H1 (cell line): ENCODE measurements at regions of chr1 and their contacts with region 1.

Region 1: GRCh38 chr1:110495926-110496600 is 22.9 kb downstream of the KCNA10 start:
- DNase-seq: peak; percentile 58 to 91
- H3K4me3 ChIP-seq: no peak overlapping the region
- H3K27ac ChIP-seq: no peak overlapping the region
- H3K4me1 ChIP-seq: peaks cover 6 to 11% (median 8%) of the 10 kb centered on the region in 4 experiments; a peak in 6 of 7 replicates
- H3K27me3 ChIP-seq: no peaks in the 10 kb centered on the region
- CTCF ChIP-seq: peak; percentile 62 to 95 (median 93)
- EP300 ChIP-seq: no peak
- POLR2A ChIP-seq: no peak
- RAD21 ChIP-seq: peak; percentile 99 to 100

Region 2: GRCh38 chr1:110196917-110197765 is 298.9 kb before region 1 on chr1:
- CTCF ChIA-PET with region 1: interaction called, 33 read pairs
- POLR2A ChIA-PET with region 1: no interaction called
- DNase-seq: peak in 1 of 2 experiments; percentile 63
- H3K4me3 ChIP-seq: no peak overlapping the region
- H3K27ac ChIP-seq: no peak overlapping the region
- H3K4me1 ChIP-seq: peaks cover 0 to 6% (median 2%) of the 10 kb centered on the region in 4 experiments; a peak in 2 of 7 replicates
- H3K27me3 ChIP-seq: no peaks in the 10 kb centered on the region
- CTCF ChIP-seq: peak; percentile 73 to 95 (median 81)
- EP300 ChIP-seq: no peak
- POLR2A ChIP-seq: no peak
- RAD21 ChIP-seq: peak; percentile 70 to 82

Region 3: GRCh38 chr1:110312188-110313121 is 183.6 kb before region 1 on chr1:
- CTCF ChIA-PET with region 1: interaction called, 19 read pairs
- POLR2A ChIA-PET with region 1: no interaction called
- DNase-seq: peak; percentile 25 to 84
- H3K4me3 ChIP-seq: peak overlapping the region in 3 of 4 experiments; percentile 6 to 46 (median 29); a peak in 5 of 8 replicates
- H3K27ac ChIP-seq: no peak overlapping the region
- H3K4me1 ChIP-seq: peaks cover 0 to 7% (median 4%) of the 10 kb centered on the region in 4 experiments; a peak in 5 of 7 replicates
- H3K27me3 ChIP-seq: no peaks in the 10 kb centered on the region; a peak in 1 of 7 replicates
- CTCF ChIP-seq: peak; percentile 97 to 98 (median 98)
- EP300 ChIP-seq: no peak
- POLR2A ChIP-seq: no peak
- RAD21 ChIP-seq: peak; percentile 97 to 98

Region 4: DNA sequence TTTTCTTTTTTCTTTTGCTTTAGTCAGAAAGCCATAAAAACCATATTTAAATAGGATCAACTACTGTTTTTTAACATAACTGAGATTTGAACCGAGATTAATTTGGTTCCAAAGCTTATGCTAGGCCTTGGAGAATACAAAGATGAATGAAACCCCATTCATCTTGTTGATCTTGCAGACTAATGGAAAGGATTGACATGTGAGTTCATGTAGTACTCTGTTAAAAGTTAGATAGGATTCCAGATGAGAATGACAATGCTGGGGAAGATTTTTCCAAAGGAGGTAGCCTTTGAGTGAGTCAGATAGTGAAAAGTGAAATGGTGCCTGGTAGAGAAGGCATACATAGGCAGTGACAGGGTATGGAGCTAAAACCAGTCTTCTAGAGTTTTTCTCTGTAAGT is 134.2 kb before region 1 on chr1:
- CTCF ChIA-PET with region 1: no interaction called
- POLR2A ChIA-PET with region 1: no interaction called
- DNase-seq: no peak
- H3K4me3 ChIP-seq: no peak overlapping the region
- H3K27ac ChIP-seq: no peak overlapping the region
- H3K4me1 ChIP-seq: no peaks in the 10 kb centered on the region
- H3K27me3 ChIP-seq: no peaks in the 10 kb centered on the region
- CTCF ChIP-seq: no peak
- EP300 ChIP-seq: no peak
- POLR2A ChIP-seq: no peak
- RAD21 ChIP-seq: no peak

Region 5: DNA sequence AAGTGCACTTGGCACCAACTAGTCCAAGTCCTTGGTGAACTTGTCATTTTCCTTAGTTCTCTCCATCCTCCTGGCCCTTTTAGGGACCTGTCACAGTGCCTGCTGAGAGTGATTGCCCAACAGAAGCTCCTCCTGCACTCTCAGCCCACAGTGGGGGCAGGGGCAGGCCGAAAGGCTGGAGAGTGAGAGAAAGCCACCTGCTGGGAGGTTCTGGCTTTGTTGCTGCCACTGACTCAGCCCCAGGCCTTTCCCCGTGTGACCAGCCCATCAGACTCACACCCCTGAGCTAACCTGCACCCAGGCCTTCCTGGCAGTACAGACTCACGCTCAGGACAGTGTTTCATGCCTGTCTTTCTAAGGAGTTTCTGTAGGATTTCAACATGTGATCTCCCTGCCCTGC is 62.3 kb before region 1 on chr1:
- CTCF ChIA-PET with region 1: interaction called, 23 read pairs
- POLR2A ChIA-PET with region 1: no interaction called
- DNase-seq: peak; percentile 38 to 66
- H3K4me3 ChIP-seq: no peak overlapping the region
- H3K27ac ChIP-seq: no peak overlapping the region
- H3K4me1 ChIP-seq: peaks cover 3 to 9% (median 7%) of the 10 kb centered on the region in 4 experiments; a peak in 6 of 7 replicates
- H3K27me3 ChIP-seq: no peaks in the 10 kb centered on the region
- CTCF ChIP-seq: no peak
- EP300 ChIP-seq: no peak
- POLR2A ChIP-seq: no peak
- RAD21 ChIP-seq: peak in 1 of 2 experiments; percentile 25; a peak in 1 of 4 replicates

Region 6: DNA sequence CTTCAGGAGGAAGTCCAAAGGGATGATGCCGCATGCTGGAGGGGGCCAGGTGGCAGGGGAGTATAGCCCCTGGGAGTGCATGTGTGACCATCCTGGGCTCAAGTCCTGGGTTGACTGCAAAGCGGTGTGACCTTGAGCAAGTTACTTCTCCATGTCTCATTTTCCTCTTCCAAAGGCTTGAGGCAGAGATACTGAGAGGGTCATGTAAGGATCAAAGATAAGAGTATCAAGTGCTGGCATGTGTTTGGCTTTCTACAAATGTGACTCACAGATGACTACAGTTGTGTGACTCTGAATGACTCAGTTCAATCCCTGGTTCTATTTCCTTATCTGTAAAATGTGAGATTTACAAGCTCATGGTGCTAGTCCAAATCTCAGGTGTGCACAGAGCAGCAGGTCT is 19.0 kb before region 1 on chr1:
- CTCF ChIA-PET with region 1: interaction called, 126 read pairs
- POLR2A ChIA-PET with region 1: no interaction called
- DNase-seq: no peak
- H3K4me3 ChIP-seq: no peak overlapping the region
- H3K27ac ChIP-seq: no peak overlapping the region
- H3K4me1 ChIP-seq: peaks cover under 1 to 8% (median 2%) of the 10 kb centered on the region in 4 experiments; a peak in 6 of 7 replicates
- H3K27me3 ChIP-seq: no peaks in the 10 kb centered on the region; a peak in 2 of 7 replicates
- CTCF ChIP-seq: no peak
- EP300 ChIP-seq: no peak
- POLR2A ChIP-seq: no peak
- RAD21 ChIP-seq: no peak

Region 7: GRCh38 chr1:110513511-110513910 is 17.4 kb after region 1 on chr1:
- CTCF ChIA-PET with region 1: interaction called, 38 read pairs
- POLR2A ChIA-PET with region 1: no interaction called
- DNase-seq: peak; percentile 29 to 52
- H3K4me3 ChIP-seq: no peak overlapping the region
- H3K27ac ChIP-seq: no peak overlapping the region
- H3K4me1 ChIP-seq: peaks cover 0 to 18% (median 7%) of the 10 kb centered on the region in 4 experiments; a peak in 6 of 7 replicates
- H3K27me3 ChIP-seq: no peaks in the 10 kb centered on the region
- CTCF ChIP-seq: peak in 2 of 3 experiments; percentile 6 to 10; a peak in 2 of 4 replicates
- EP300 ChIP-seq: no peak
- POLR2A ChIP-seq: no peak
- RAD21 ChIP-seq: no peak

Region 8: GRCh38 chr1:110619412-110620249 is 123.6 kb after region 1 on chr1:
- CTCF ChIA-PET with region 1: interaction called, 19 read pairs
- POLR2A ChIA-PET with region 1: no interaction called
- DNase-seq: peak; percentile 53 to 94
- H3K4me3 ChIP-seq: peak overlapping the region; percentile 13 to 56 (median 48); a peak in 7 of 8 replicates
- H3K27ac ChIP-seq: no peak overlapping the region
- H3K4me1 ChIP-seq: peaks cover 0 to 2% (median 0%) of the 10 kb centered on the region in 4 experiments; a peak in 4 of 7 replicates
- H3K27me3 ChIP-seq: peaks cover 0 to 18% (median 10%) of the 10 kb centered on the region in 4 experiments; a peak in 4 of 7 replicates
- CTCF ChIP-seq: peak; percentile 94 to 99 (median 97)
- EP300 ChIP-seq: no peak
- POLR2A ChIP-seq: no peak
- RAD21 ChIP-seq: peak; percentile 79 to 84

Region 9: DNA sequence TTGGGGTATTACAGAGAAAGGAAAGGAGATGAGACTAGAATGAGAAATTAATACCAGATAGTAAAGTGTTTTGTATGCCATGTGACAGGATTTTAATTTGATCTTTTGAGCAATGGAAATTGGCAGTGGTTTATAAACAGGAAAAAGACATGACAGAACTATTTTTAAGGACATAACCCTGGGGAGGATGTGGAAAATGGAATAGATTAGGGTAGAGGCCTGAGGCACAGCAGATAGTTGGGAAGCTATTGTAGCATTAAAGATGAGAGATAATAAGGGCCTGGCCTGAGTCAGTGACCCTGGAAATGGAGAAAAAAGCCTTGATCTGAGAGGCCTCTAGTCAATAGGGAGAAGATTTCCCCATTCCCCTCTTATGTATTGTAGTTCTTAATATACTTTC is 200.8 kb after region 1 on chr1:
- CTCF ChIA-PET with region 1: no interaction called
- POLR2A ChIA-PET with region 1: no interaction called
- DNase-seq: no peak
- H3K4me3 ChIP-seq: no peak overlapping the region
- H3K27ac ChIP-seq: no peak overlapping the region
- H3K4me1 ChIP-seq: no peaks in the 10 kb centered on the region
- H3K27me3 ChIP-seq: no peaks in the 10 kb centered on the region
- CTCF ChIP-seq: no peak
- EP300 ChIP-seq: no peak
- POLR2A ChIP-seq: no peak
- RAD21 ChIP-seq: no peak

Region 10: GRCh38 chr1:110829955-110830553 is 334.0 kb after region 1 on chr1:
- CTCF ChIA-PET with region 1: no interaction called
- POLR2A ChIA-PET with region 1: no interaction called
- DNase-seq: peak; percentile 15 to 46
- H3K4me3 ChIP-seq: no peak overlapping the region
- H3K27ac ChIP-seq: no peak overlapping the region
- H3K4me1 ChIP-seq: no peaks in the 10 kb centered on the region
- H3K27me3 ChIP-seq: no peaks in the 10 kb centered on the region
- CTCF ChIP-seq: peak in 2 of 3 experiments; percentile 76 to 82; a peak in 3 of 4 replicates
- EP300 ChIP-seq: no peak
- POLR2A ChIP-seq: no peak
- RAD21 ChIP-seq: peak; percentile 59 to 64